Activated T-helper 2 cell treated with anti-CD3 and anti-CD28 coated beads, Interferon-gamma antibody, Interleukin-2, Interleukin-4, amounts not matched to agents 10 μg/mL and 5 μg/mL and 100 μg/mL, durations not matched to agents 14 hours and 24 hours and 36 hours (primary cell): ENCODE measurements at regions of chr10 and their contacts with region 1.

Region 1: DNA sequence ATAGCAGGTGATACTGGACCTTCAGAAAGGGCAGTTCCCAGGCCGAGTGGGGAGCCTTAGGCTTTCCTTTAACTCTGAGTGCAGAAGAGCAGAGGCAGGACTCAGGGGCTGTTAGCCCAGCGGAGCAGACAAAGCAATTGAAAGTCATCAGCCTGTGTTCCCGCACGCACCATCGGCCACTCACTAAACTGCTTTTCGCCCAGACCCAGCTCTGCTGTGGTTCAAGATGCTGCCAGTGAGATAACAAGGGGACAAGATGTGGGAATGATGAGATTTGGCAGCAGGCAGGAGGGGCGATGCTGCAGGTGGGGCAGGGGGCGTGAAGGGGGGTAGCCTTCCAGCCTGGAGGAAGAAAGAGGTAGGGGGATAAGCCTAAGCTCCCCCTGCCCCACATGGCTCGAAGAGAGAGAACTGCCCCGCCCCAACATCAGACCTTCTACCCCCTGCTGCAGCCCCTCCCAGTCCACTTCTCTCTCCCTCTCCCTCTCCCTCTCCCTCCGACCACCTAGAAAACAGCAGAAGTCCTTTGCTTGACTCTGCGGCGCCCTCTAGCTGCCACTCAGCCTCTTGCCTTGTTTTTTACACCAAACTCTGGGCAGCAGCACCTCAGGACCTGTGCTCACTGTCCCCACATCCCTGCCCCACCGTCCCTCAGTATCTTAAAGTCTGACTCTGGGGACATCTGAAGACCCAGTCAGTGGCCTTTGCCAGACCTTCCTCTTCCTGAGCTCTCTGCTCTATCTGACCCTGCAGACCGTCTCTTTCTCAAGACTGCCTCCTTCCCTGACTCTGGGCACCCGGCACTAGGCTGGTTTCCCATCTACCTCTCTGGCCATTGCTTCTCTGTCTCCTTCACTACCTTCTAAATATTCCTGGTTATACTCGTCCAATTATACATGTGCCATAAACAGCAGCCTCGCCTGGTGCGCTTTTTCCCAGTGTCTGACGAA is 110.5 kb downstream of the C10orf105 start:
- DNase-seq: peak; percentile 34
- H3K4me3 Mint-ChIP-seq: no peak overlapping the region
- H3K27ac Mint-ChIP-seq: no peak overlapping the region
- H3K4me1 Mint-ChIP-seq: peaks cover 15% of the 10 kb centered on the region
- H3K27me3 Mint-ChIP-seq: peaks cover 3% of the 10 kb centered on the region

Region 2: GRCh38 chr10:71396084-71396720 is 212.9 kb before region 1 on chr10:
- intact Hi-C with region 1: loop called (anchors 10 kb)
- DNase-seq: no peak
- H3K4me3 Mint-ChIP-seq: no peak overlapping the region
- H3K27ac Mint-ChIP-seq: no peak overlapping the region
- H3K4me1 Mint-ChIP-seq: no peaks in the 10 kb centered on the region
- H3K27me3 Mint-ChIP-seq: peaks cover 58% of the 10 kb centered on the region

Region 3: GRCh38 chr10:71486484-71487114 is 122.5 kb before region 1 on chr10:
- intact Hi-C with region 1: loop called (anchors 1 kb)
- DNase-seq: peak; percentile 12
- H3K4me3 Mint-ChIP-seq: no peak overlapping the region
- H3K27ac Mint-ChIP-seq: no peak overlapping the region
- H3K4me1 Mint-ChIP-seq: no peaks in the 10 kb centered on the region
- H3K27me3 Mint-ChIP-seq: no peaks in the 10 kb centered on the region